ENCODE measurements at regions of chr20 and their contacts with region 1.

Region 1: GRCh38 chr20:17682103-17682888 is at the start of gene RRBP1:
- DNase-seq: peak; percentile 98
- ATAC-seq: peak; percentile 97
- H3K4me3 Mint-ChIP-seq: peak within 1 kb of the TSS; percentile 76
- H3K27ac Mint-ChIP-seq: peak within 1 kb of the TSS; percentile 74
- H3K4me1 Mint-ChIP-seq: peaks cover 16% of the 10 kb centered on the region
- H3K27me3 Mint-ChIP-seq: peaks cover 20% of the 10 kb centered on the region
- total RNA-seq, gene RRBP1: 21.1 to 24.9 TPM

Region 2: GRCh38 chr20:16729565-16730456 is 952.5 kb before region 1 on chr20 and contains the start of gene SNRPB2:
- CTCF ChIA-PET with region 1: no interaction called
- POLR2A ChIA-PET with region 1: no interaction called
- intact Hi-C with region 1: loop called (anchors 1 to 10 kb)
- DNase-seq: peak; percentile 95
- ATAC-seq: peak; percentile 95
- H3K4me3 Mint-ChIP-seq: peak within 1 kb of the TSS; percentile 95
- H3K27ac Mint-ChIP-seq: peak within 1 kb of the TSS; percentile 98
- H3K4me1 Mint-ChIP-seq: peaks cover 46% of the 10 kb centered on the region
- H3K27me3 Mint-ChIP-seq: peaks cover 9% of the 10 kb centered on the region
- total RNA-seq, gene SNRPB2: 122 to 129 TPM

Region 3: DNA sequence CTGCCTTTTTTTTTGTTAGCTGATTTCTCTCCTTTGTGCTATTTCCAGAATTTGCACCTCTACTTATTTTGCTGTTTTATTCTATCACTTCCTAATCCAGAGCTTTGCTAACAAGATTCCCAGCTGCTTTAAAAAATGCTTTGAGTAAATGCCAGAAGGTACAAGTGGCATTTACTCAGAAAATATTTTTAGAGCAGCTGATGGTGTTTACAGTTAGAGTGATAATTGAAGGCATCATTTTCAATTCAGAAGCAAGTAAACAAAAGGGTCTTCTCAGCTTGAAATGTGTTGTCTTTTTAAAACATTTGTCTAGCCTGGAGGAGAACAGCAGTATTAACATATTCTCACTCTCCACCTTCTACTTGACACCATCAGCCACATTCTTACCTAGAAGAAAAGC is 834.2 kb before region 1 on chr20:
- CTCF ChIA-PET with region 1: no interaction called
- POLR2A ChIA-PET with region 1: no interaction called
- intact Hi-C with region 1: no loop called
- DNase-seq: no peak
- ATAC-seq: no peak
- H3K4me3 Mint-ChIP-seq: no peak overlapping the region
- H3K27ac Mint-ChIP-seq: no peak overlapping the region
- H3K4me1 Mint-ChIP-seq: no peaks in the 10 kb centered on the region
- H3K27me3 Mint-ChIP-seq: no peaks in the 10 kb centered on the region

Region 4: GRCh38 chr20:17569616-17570346 is 112.5 kb before region 1 on chr20 and contains the start of gene DSTN:
- CTCF ChIA-PET with region 1: interaction called, 6 read pairs
- POLR2A ChIA-PET with region 1: interaction called, 5 read pairs
- intact Hi-C with region 1: loop called (anchors 1 to 2 kb)
- DNase-seq: peak; percentile 92
- ATAC-seq: peak; percentile 89
- H3K4me3 Mint-ChIP-seq: peak within 1 kb of the TSS; percentile 88
- H3K27ac Mint-ChIP-seq: peak within 1 kb of the TSS; percentile 88
- H3K4me1 Mint-ChIP-seq: peaks cover 26% of the 10 kb centered on the region
- H3K27me3 Mint-ChIP-seq: peaks cover 7% of the 10 kb centered on the region
- total RNA-seq, gene DSTN: 66.2 to 68.4 TPM

Region 5: GRCh38 chr20:17898548-17898994 is 216.3 kb after region 1 on chr20:
- CTCF ChIA-PET with region 1: interaction called, 18 read pairs
- POLR2A ChIA-PET with region 1: interaction called, 3 read pairs
- intact Hi-C with region 1: loop called (anchors 1 to 2 kb)
- DNase-seq: peak; percentile 80
- ATAC-seq: peak; percentile 47
- H3K4me3 Mint-ChIP-seq: no peak overlapping the region
- H3K27ac Mint-ChIP-seq: no peak overlapping the region
- H3K4me1 Mint-ChIP-seq: peaks cover 17% of the 10 kb centered on the region
- H3K27me3 Mint-ChIP-seq: peaks cover 27% of the 10 kb centered on the region

Region 6: GRCh38 chr20:17968366-17969279 is 286.3 kb after region 1 on chr20 and contains the starts of genes MGME1 and SNX5:
- CTCF ChIA-PET with region 1: interaction called, 4 read pairs
- POLR2A ChIA-PET with region 1: interaction called, 6 read pairs
- intact Hi-C with region 1: loop called (anchors 1 kb)
- DNase-seq: peak; percentile 100
- ATAC-seq: peak; percentile 91
- H3K4me3 Mint-ChIP-seq: peak within 1 kb of the TSS; percentile 87
- H3K27ac Mint-ChIP-seq: peak within 1 kb of the TSS; percentile 99
- H3K4me1 Mint-ChIP-seq: peaks cover 49% of the 10 kb centered on the region
- H3K27me3 Mint-ChIP-seq: no peaks in the 10 kb centered on the region
- total RNA-seq, gene MGME1: 24.1 to 29.7 TPM
- total RNA-seq, gene SNX5: 204 to 227 TPM

Region 7: GRCh38 chr20:18056174-18057100 is 374.1 kb after region 1 on chr20:
- CTCF ChIA-PET with region 1: no interaction called
- POLR2A ChIA-PET with region 1: no interaction called
- intact Hi-C with region 1: no loop called
- DNase-seq: peak; percentile 28
- ATAC-seq: peak; percentile 80
- H3K4me3 Mint-ChIP-seq: peak overlapping the region; percentile 44
- H3K27ac Mint-ChIP-seq: no peak overlapping the region
- H3K4me1 Mint-ChIP-seq: peaks cover 8% of the 10 kb centered on the region
- H3K27me3 Mint-ChIP-seq: peaks cover 54% of the 10 kb centered on the region

Region 8: GRCh38 chr20:18287915-18288748 is 605.8 kb after region 1 on chr20 and contains the start of gene ZNF133:
- CTCF ChIA-PET with region 1: interaction called, 3 read pairs
- POLR2A ChIA-PET with region 1: no interaction called
- intact Hi-C with region 1: loop called in 1 of 2 experiments (anchors 1 kb)
- DNase-seq: peak; percentile 97
- ATAC-seq: peak; percentile 98
- H3K4me3 Mint-ChIP-seq: peak within 1 kb of the TSS; percentile 98
- H3K27ac Mint-ChIP-seq: peak within 1 kb of the TSS; percentile 99
- H3K4me1 Mint-ChIP-seq: peaks cover 19% of the 10 kb centered on the region
- H3K27me3 Mint-ChIP-seq: peaks cover 14% of the 10 kb centered on the region
- total RNA-seq, gene ZNF133: 8.8 to 10.1 TPM

Region 9: DNA sequence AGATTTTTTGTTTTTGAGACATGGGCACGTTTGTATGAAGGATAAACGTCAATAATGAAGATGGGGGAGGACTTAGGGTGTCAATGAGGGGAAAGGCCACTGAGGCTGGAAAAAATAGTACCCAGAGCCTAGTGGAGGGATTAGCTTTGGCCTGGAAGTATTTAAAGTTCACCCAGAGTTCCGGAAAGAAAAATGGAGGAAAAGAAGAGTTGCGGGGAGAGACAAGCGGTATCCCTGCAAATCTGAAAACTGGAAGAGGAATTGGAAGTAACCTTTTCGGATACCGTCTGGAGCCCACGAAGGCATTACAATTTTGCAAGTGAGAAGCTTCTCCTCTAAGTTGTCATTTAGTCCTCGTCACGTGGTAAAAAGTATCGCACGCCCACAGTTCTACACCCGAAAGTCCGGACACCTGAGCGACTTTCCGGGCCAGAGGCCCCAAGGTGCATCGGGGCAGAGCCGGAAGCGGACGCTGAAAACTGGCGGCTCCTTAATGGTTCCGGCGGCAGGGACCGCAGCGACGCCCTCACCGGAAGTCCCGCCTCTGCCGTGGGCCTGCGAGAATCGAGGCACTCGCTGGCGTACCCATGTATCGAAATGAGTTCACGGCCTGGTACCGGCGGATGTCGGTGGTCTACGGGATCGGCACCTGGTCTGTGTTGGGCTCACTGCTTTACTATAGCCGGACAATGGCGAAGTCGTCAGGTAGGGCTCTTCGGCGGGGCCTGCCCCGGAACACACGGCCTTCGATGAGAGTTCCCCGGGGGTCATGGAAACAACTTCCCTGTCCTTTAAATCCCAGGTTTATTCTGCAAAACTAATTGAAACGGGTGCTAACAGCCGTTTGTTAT is 884.8 kb after region 1 on chr20 and contains the start of gene SMIM26:
- CTCF ChIA-PET with region 1: no interaction called
- POLR2A ChIA-PET with region 1: no interaction called
- intact Hi-C with region 1: loop called in 1 of 2 experiments (anchors 1 kb)
- DNase-seq: peak; percentile 97
- ATAC-seq: peak; percentile 100
- H3K4me3 Mint-ChIP-seq: peak within 1 kb of the TSS; percentile 98
- H3K27ac Mint-ChIP-seq: peak within 1 kb of the TSS; percentile 92
- H3K4me1 Mint-ChIP-seq: peaks cover 13% of the 10 kb centered on the region
- H3K27me3 Mint-ChIP-seq: no peaks in the 10 kb centered on the region
- total RNA-seq, gene SMIM26: 64.4 to 66.2 TPM

Measured in activated CD4-positive, alpha-beta T cell treated with anti-CD3 and anti-CD28 coated beads for 36 hours (primary cell).